ENCODE measurements at regions of chr20 and their contacts with region 1.

Region 1: DNA sequence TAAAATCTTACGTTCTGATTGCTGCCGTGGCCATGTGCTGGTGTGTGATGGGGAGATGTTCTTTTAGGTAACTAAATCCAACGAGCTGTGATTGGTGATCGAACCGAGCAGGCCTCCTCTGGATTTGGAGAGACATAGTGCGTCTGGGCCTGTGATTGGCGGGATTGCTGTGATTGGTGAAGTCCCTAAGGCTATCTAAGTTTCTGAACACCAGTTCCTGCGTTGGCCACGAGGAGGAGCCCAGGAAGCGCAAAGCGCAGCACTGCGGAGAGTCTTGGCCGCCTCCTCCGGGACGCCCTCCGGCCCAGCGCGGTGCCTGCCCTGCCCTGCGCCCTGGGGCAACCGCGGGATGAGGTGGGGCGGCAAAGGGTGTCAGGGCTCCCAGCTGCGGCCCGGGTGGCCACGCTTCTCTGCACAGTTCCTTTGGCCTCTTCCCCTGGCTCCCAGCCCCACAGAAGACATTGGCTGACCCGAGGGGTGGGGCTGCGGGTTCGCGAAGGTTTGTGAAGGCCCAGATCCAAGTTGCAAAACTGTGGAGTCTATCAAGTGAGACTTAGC is 33.0 kb downstream of the HNF4A start:
- DNase-seq: peak; percentile 26
- H3K4me3 ChIP-seq: no peak overlapping the region
- CTCF ChIP-seq: peak; percentile 84

Region 2: DNA sequence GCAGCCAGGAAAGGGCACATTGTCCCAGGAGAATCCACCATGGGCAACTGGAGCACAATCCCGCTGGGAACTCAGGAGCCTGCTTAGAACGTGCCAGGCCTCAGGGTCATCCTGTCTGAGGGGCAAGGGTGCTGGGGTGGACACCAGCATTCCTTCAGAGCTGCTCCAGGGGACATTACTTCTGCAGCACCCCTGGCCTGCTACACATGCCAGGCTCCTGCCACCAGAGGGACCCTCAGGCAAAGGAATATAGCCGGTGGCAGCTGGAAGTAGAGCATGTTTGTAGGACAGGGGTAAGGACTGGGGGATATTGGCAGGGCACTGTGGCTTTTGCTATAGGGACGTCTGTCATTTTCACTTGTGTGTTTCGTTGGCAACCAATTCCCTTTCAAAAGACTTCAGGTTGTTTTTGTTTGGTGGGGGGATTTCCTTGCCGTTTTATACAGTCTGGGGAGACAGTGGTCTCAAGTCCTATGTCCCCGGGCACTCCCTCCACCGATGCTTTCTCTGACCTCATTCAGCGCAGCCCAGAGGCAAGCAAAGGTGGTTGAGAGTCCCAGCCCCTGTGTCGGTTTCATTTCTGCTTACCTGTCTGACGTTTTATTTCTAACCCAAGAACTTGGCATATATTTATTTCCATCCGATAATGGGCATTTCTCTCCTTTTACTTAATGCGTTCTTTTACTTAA is 332.4 kb before region 1 on chr20:
- in situ Hi-C with region 1: no loop called
- DNase-seq: no peak
- H3K4me3 ChIP-seq: no peak overlapping the region
- CTCF ChIP-seq: peak; percentile 54

Region 3: DNA sequence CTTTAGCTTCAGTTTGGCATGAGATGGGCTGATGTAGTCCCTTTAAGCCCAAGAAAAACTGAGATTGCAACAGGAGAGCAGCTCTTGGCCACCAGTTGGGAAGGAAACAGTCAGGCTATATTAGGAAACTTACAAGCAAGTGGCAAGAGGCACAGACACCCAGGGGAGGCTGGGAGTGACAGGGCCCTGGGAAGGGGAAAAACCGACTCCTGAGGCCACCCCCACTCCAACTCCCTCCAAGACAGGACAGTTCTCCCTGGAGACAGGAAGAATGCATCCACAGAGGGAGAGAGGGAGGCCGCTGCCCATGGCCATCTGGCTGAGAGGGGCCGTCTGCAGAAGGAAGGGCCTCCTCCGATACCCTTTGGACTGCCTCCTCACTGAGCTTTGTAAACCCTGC is 222.1 kb before region 1 on chr20:
- in situ Hi-C with region 1: no loop called
- DNase-seq: no peak
- H3K4me3 ChIP-seq: no peak overlapping the region
- CTCF ChIP-seq: no peak

Region 4: GRCh38 chr20:44326391-44327159 is 62.0 kb before region 1 on chr20:
- in situ Hi-C with region 1: loop called (anchors 10 kb)
- DNase-seq: no peak
- H3K4me3 ChIP-seq: peak overlapping the region; percentile 18
- CTCF ChIP-seq: no peak

Region 5: GRCh38 chr20:44460795-44461141 is 72.2 kb after region 1 on chr20:
- in situ Hi-C with region 1: loop called (anchors 5 kb)
- DNase-seq: peak; percentile 16
- H3K4me3 ChIP-seq: no peak overlapping the region
- CTCF ChIP-seq: peak; percentile 51

Measured in astrocyte of the cerebellum (primary cell).